ENCODE measurements at regions of chr20 and their contacts with region 1.

Region 1: GRCh38 chr20:43961541-43962471 is 47.2 kb downstream of the TOX2 start:
- DNase-seq: no peak
- ATAC-seq: no peak
- H3K4me3 ChIP-seq: no peak overlapping the region
- H3K27ac ChIP-seq: peak overlapping the region; percentile 91
- H3K4me1 ChIP-seq: peaks cover 78% of the 10 kb centered on the region
- H3K27me3 ChIP-seq: no peaks in the 10 kb centered on the region
- CTCF ChIP-seq: no peak

Region 2: DNA sequence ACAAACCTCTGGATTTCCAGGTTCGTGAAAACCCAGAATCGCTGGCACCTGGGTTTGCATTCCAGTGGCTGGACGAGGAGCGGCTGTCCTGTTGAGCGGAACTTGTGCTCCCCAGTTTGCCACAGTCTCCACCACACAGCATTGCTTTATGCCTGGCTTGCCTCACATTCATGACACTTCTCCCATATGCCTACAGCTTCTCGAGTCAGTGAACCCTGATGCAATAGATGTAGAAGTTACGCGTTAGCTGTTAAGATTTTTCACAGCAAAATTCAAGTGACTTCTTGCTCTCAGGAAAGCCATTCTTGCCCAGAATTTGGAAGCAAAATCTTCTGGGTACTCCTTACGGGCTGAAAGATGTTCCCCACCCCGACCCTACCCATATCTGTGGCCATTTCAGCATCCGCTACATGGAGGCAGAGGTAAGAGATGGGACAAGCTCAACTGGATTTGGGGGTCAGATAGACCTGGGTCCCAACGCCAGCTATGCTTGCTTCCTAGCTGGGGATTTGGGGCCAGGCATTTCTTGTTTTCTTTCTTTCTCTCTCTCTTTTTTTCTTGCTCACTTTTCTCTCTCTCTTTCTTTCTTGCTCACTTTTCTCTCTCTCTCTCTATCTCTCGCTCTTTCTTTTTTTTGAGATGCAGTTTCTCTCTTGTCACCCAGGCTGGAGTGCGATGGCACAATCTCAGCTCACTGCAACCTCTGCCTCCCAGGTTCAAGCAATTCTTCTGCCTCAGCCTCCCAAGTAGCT is 272.9 kb after region 1 on chr20:
- CTCF ChIA-PET with region 1: no interaction called
- POLR2A ChIA-PET with region 1: interaction called, 15 read pairs
- in situ Hi-C with region 1: no loop called
- intact Hi-C with region 1: no loop called
- DNase-seq: no peak
- ATAC-seq: no peak
- H3K4me3 ChIP-seq: no peak overlapping the region
- H3K27ac ChIP-seq: peak overlapping the region; percentile 21; the same call in 1 of the 2 replicates
- H3K4me1 ChIP-seq: no peaks in the 10 kb centered on the region
- H3K27me3 ChIP-seq: no peaks in the 10 kb centered on the region
- CTCF ChIP-seq: no peak